BJ (cell line): ENCODE measurements at regions of chr2 and their contacts with region 1.

Region 1: GRCh38 chr2:235595422-235596010 is 101.7 kb downstream of the AGAP1 start:
- DNase-seq: peak; percentile 23
- H3K4me3 ChIP-seq: no peak overlapping the region
- H3K27me3 ChIP-seq: no peaks in the 10 kb centered on the region
- CTCF ChIP-seq: peak; percentile 85

Region 2: GRCh38 chr2:235142601-235143000 is 452.9 kb before region 1 on chr2:
- CTCF ChIA-PET with region 1: interaction called, 170 read pairs
- POLR2A ChIA-PET with region 1: no interaction called
- DNase-seq: no peak
- H3K4me3 ChIP-seq: no peak overlapping the region
- H3K27me3 ChIP-seq: peaks cover 11% of the 10 kb centered on the region
- CTCF ChIP-seq: no peak

Region 3: GRCh38 chr2:235634435-235635158 is 39.1 kb after region 1 on chr2:
- CTCF ChIA-PET with region 1: interaction called, 10 read pairs
- POLR2A ChIA-PET with region 1: no interaction called
- DNase-seq: no peak
- H3K4me3 ChIP-seq: no peak overlapping the region
- H3K27me3 ChIP-seq: no peaks in the 10 kb centered on the region
- CTCF ChIP-seq: no peak

Region 4: GRCh38 chr2:235716899-235717442 is 121.5 kb after region 1 on chr2:
- CTCF ChIA-PET with region 1: no interaction called
- POLR2A ChIA-PET with region 1: no interaction called
- DNase-seq: no peak
- H3K4me3 ChIP-seq: no peak overlapping the region
- H3K27me3 ChIP-seq: no peaks in the 10 kb centered on the region; the same call in 1 of the 2 replicates
- CTCF ChIP-seq: no peak

Region 5: DNA sequence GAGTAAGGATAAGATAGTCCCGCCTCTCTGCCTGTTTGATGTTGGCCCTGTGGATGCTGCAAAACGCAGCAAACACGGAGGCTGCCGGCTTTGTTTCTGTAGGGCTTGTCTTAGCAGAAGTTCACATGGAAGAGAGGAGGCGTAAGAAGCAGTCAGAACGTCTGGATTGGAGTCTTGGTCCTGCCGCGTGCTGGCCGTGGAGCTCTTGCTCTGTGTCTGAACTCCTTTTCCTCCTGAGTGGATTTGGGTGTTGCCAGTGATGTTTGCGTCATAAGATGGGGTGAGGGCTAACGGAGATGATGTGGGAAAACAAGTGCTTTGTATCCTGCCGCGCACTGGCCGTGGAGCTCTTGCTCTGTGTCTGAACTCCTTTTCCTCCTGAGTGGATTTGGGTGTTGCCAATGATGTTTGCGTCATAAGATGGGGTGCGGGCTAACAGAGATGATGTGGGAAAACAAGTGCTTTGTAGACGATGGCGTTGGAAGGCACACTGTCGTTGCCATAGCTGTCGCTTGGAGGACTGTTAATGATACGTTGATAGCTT is 139.2 kb after region 1 on chr2:
- CTCF ChIA-PET with region 1: interaction called, 15 read pairs
- POLR2A ChIA-PET with region 1: no interaction called
- DNase-seq: no peak
- H3K4me3 ChIP-seq: no peak overlapping the region
- H3K27me3 ChIP-seq: no peaks in the 10 kb centered on the region
- CTCF ChIP-seq: no peak

Region 6: DNA sequence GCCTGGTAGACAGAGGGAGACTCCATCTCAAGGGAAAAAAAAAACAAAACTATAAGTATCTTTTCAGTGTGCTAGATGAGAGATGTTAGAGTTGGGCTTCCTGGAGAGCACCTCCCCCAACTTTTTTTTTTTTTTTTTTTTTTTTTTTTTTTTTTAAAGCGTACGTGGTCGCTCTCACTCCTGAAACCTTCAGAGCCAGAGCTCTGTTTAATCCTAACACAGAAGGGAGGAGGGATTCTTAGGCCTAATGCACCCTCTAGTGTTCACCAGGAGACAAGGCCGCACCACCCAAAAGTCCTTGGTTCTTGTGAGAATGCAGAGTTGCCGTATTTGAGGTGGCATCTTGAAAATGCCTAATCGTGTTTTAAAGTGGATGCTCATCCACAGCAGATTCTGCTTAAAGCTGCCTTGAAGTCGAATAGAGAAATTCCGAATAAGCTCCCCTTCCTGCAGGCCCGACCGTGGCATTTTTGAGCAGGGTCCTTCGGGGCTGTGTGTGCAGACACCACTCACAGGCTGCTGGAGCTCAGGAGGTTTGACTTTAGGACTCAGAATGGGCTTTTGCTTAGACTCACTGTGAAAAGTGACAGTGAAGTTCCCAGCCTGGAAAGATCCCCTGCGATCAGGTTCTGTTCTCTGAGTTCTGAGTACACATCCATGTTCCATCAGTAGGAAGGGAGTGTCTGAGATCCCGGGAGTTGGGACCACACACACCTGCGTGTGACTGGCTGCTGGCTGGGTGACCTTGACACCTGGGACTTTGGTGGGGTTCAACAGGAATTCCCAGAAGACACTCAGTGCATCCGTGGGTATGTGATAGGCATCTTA is 151.0 kb after region 1 on chr2:
- CTCF ChIA-PET with region 1: interaction called, 146 read pairs
- POLR2A ChIA-PET with region 1: interaction called, 5 read pairs
- DNase-seq: no peak
- H3K4me3 ChIP-seq: no peak overlapping the region
- H3K27me3 ChIP-seq: no peaks in the 10 kb centered on the region
- CTCF ChIP-seq: peak; percentile 84

Region 7: GRCh38 chr2:237045432-237045831 is 1449.9 kb after region 1 on chr2:
- CTCF ChIA-PET with region 1: no interaction called
- POLR2A ChIA-PET with region 1: no interaction called
- DNase-seq: peak; percentile 69
- H3K4me3 ChIP-seq: no peak overlapping the region
- H3K27me3 ChIP-seq: no peaks in the 10 kb centered on the region
- CTCF ChIP-seq: no peak